ENCODE measurements at regions of chr13 and their contacts with region 1.

Region 1: GRCh38 chr13:73335221-73335620 is 276.4 kb downstream of the KLF5 start:
- DNase-seq: peak; percentile 89
- H3K4me3 Mint-ChIP-seq: peak overlapping the region; percentile 44
- H3K27ac Mint-ChIP-seq: peak overlapping the region; percentile 97
- H3K4me1 Mint-ChIP-seq: peaks cover 41% of the 10 kb centered on the region
- H3K27me3 Mint-ChIP-seq: no peaks in the 10 kb centered on the region
- CTCF ChIP-seq: no peak

Region 2: GRCh38 chr13:71906448-71906847 is 1428.8 kb before region 1 on chr13:
- CTCF ChIA-PET with region 1: no interaction called
- POLR2A ChIA-PET with region 1: no interaction called
- intact Hi-C with region 1: no loop called
- DNase-seq: no peak
- H3K4me3 Mint-ChIP-seq: no peak overlapping the region
- H3K27ac Mint-ChIP-seq: no peak overlapping the region
- H3K4me1 Mint-ChIP-seq: no peaks in the 10 kb centered on the region
- H3K27me3 Mint-ChIP-seq: peaks cover 15% of the 10 kb centered on the region
- CTCF ChIP-seq: no peak

Region 3: GRCh38 chr13:73158851-73159250 is 176.4 kb before region 1 on chr13:
- CTCF ChIA-PET with region 1: no interaction called
- POLR2A ChIA-PET with region 1: no interaction called
- intact Hi-C with region 1: no loop called
- DNase-seq: peak; percentile 64
- H3K4me3 Mint-ChIP-seq: no peak overlapping the region
- H3K27ac Mint-ChIP-seq: peak overlapping the region; percentile 88
- H3K4me1 Mint-ChIP-seq: peaks cover 14% of the 10 kb centered on the region
- H3K27me3 Mint-ChIP-seq: no peaks in the 10 kb centered on the region
- CTCF ChIP-seq: no peak

Region 4: DNA sequence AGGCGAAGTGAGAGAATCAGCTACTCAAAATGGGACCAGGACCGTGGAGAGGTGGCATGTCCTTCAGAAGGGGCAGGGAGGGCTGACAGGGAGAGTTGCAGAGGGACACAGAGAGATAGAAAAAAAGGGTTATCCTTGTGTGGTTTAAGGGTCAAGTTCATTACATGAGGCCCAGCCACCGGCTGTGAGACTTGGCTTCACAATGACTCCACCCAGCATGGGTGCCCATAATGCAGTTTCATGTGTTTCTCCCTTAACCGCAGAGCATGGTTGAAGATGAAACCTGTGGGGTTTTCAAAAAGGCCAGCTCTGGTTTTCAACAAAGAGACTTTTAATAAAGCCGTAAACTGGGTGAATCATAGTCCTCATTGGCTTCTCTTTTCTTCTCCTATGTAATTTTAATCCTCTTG is 111.8 kb before region 1 on chr13:
- CTCF ChIA-PET with region 1: no interaction called
- POLR2A ChIA-PET with region 1: no interaction called
- intact Hi-C with region 1: loop called (anchors 2 kb)
- DNase-seq: no peak
- H3K4me3 Mint-ChIP-seq: no peak overlapping the region
- H3K27ac Mint-ChIP-seq: peak overlapping the region; percentile 28
- H3K4me1 Mint-ChIP-seq: peaks cover 17% of the 10 kb centered on the region
- H3K27me3 Mint-ChIP-seq: no peaks in the 10 kb centered on the region
- CTCF ChIP-seq: no peak

Region 5: DNA sequence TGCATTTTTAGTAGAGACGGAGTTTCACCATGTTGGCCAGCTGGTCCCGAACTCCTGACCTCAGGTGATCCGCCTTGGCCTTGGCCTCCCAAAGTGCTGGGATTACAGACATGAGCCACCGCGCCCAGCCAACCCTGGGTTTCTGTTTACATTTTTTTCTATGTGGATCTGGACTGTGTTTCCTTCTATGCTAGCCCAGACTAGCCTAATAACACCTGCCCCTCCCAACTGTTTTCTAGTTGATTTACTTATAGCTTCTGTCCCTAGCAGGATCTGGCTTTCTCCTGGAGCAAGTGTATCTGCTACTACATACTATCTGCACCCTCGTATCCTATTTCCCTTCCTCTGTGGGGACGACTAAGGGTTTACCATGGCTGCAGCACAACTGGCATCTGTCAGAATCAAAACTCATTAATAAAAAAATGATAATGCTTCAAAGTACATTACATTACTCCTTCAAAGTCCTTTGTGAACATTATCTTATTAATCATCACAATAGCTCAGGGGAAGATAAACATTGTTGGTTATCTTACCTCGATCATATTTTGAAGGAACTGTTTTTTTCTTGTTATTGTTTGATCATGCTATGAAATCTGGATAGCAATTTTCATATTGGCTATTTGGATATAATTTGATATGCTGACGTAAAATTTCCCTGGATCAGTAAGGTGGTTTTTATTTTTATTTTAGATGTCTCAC is 48.1 kb before region 1 on chr13:
- CTCF ChIA-PET with region 1: no interaction called
- POLR2A ChIA-PET with region 1: interaction called, 20 read pairs
- intact Hi-C with region 1: no loop called
- DNase-seq: peak; percentile 49
- H3K4me3 Mint-ChIP-seq: no peak overlapping the region
- H3K27ac Mint-ChIP-seq: peak overlapping the region; percentile 83
- H3K4me1 Mint-ChIP-seq: peaks cover 18% of the 10 kb centered on the region
- H3K27me3 Mint-ChIP-seq: no peaks in the 10 kb centered on the region
- CTCF ChIP-seq: no peak

Region 6: GRCh38 chr13:73417015-73417623 is 81.9 kb after region 1 on chr13:
- CTCF ChIA-PET with region 1: interaction called, 4 read pairs
- POLR2A ChIA-PET with region 1: interaction called, 9 read pairs
- intact Hi-C with region 1: loop called (anchors 2 kb)
- DNase-seq: peak; percentile 53
- H3K4me3 Mint-ChIP-seq: no peak overlapping the region
- H3K27ac Mint-ChIP-seq: no peak overlapping the region
- H3K4me1 Mint-ChIP-seq: peaks cover 25% of the 10 kb centered on the region
- H3K27me3 Mint-ChIP-seq: no peaks in the 10 kb centered on the region
- CTCF ChIP-seq: peak; percentile 25

Region 7: DNA sequence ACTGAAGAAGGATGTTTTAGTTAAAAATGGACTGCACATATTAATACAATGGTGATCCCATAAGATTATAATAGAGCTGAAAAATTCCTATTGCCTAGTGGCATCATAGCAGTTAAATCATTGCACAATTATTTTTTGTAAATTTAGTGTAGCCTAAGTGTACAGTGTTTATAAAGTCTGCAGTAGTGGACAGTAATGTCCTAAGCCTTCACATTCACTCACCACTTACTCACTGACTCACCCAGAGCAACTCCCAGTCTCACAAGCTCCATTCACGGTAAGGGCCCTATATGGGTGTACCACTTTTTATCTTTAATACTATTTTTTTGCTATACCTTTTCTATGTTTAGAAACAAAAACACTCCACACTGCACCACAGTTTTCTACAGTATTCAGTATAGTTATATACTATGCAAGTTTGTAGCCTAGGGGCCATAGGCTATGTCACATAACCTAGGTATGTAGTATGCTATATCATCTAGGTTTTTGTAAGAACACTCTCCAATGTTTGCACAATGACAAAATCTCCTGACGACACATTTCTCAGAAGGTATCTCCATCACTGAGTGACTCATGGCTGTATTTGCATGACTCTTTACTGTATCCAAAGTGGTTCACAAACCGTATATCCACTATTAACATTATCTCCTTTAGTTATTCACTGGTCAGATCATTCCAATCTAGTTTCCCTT is 262.9 kb after region 1 on chr13:
- CTCF ChIA-PET with region 1: no interaction called
- POLR2A ChIA-PET with region 1: no interaction called
- intact Hi-C with region 1: loop called (anchors 2 kb)
- DNase-seq: peak; percentile 86
- H3K4me3 Mint-ChIP-seq: no peak overlapping the region
- H3K27ac Mint-ChIP-seq: peak overlapping the region; percentile 92
- H3K4me1 Mint-ChIP-seq: peaks cover 33% of the 10 kb centered on the region
- H3K27me3 Mint-ChIP-seq: no peaks in the 10 kb centered on the region
- CTCF ChIP-seq: no peak

Region 8: DNA sequence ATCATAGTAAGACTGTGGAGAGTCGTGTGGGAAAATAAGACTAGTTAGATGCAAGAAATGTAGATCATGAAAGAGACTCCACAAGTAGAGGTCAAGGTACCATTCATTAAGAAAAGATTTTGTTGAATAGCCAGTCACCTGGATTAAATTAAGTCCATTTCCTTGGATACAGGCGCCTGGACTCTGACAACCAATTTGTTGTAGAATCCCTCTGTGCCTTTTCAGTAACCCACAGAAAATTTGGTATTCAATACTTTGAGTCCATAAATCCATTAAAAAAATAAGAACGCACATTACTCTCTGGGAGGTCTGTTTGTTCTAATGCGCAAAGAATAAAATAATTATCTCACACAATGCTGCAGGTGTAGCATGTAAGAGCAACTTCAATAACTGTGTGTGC is 329.6 kb after region 1 on chr13:
- CTCF ChIA-PET with region 1: no interaction called
- POLR2A ChIA-PET with region 1: no interaction called
- intact Hi-C with region 1: no loop called
- DNase-seq: no peak
- H3K4me3 Mint-ChIP-seq: no peak overlapping the region
- H3K27ac Mint-ChIP-seq: no peak overlapping the region
- H3K4me1 Mint-ChIP-seq: peaks cover 5% of the 10 kb centered on the region
- H3K27me3 Mint-ChIP-seq: no peaks in the 10 kb centered on the region
- CTCF ChIP-seq: no peak

Region 9: GRCh38 chr13:73708393-73708985 is 373.3 kb after region 1 on chr13:
- CTCF ChIA-PET with region 1: no interaction called
- POLR2A ChIA-PET with region 1: interaction called, 10 read pairs
- intact Hi-C with region 1: loop called (anchors 1 kb)
- DNase-seq: peak; percentile 84
- H3K4me3 Mint-ChIP-seq: no peak overlapping the region
- H3K27ac Mint-ChIP-seq: no peak overlapping the region
- H3K4me1 Mint-ChIP-seq: peaks cover 22% of the 10 kb centered on the region
- H3K27me3 Mint-ChIP-seq: no peaks in the 10 kb centered on the region
- CTCF ChIP-seq: peak; percentile 92

Region 10: DNA sequence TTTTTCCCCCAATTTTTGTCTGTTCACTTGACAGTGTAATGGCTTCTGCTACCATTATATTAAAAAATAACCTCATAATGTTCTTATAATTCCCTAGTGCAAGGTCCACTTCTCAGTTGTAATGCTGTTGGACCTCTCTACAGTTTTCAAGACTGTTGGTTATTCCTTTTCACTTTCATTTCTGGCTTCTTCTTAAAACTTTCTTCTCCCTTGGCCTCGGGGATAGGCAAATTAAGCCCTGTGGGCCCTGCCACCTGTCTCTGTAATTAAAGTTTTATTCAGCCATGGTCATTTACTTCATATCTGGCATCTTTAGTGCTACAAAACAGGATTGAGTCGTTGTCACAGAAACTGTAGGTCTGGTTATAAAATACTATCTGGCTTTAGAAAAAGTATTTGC is 485.5 kb after region 1 on chr13:
- CTCF ChIA-PET with region 1: no interaction called
- POLR2A ChIA-PET with region 1: no interaction called
- intact Hi-C with region 1: no loop called
- DNase-seq: no peak
- H3K4me3 Mint-ChIP-seq: no peak overlapping the region
- H3K27ac Mint-ChIP-seq: no peak overlapping the region
- H3K4me1 Mint-ChIP-seq: no peaks in the 10 kb centered on the region
- H3K27me3 Mint-ChIP-seq: no peaks in the 10 kb centered on the region
- CTCF ChIP-seq: no peak

Measured in MCF 10A (cell line).